Heart right ventricle (tissue), 16 donors: ENCODE measurements at regions of chr6 and their contacts with region 1.

Region 1: GRCh38 chr6:135901774-135902524 is 50.4 kb downstream of the PDE7B start:
- DNase-seq: peak in 1 of 2 donors; percentile 78
- ATAC-seq: peak; percentile 55 to 92 (median 80)
- H3K4me3 ChIP-seq: peak overlapping the region in 6 of 10 donors; percentile 3 to 31 (median 11)
- H3K27ac ChIP-seq: peak overlapping the region; percentile 51 to 83 (median 70)
- H3K4me1 ChIP-seq: peaks cover 7 to 38% (median 24%) of the 10 kb centered on the region in 9 donors
- H3K27me3 ChIP-seq: no peaks in the 10 kb centered on the region
- CTCF ChIP-seq: no peak

Region 2: GRCh38 chr6:134416418-134417154 is 1485.4 kb before region 1 on chr6:
- intact Hi-C with region 1: no loop called
- DNase-seq: no peak
- ATAC-seq: no peak
- H3K4me3 ChIP-seq: no peak overlapping the region
- H3K27ac ChIP-seq: peak overlapping the region in 1 of 10 donors; percentile 24
- H3K4me1 ChIP-seq: peaks cover 0 to 49% (median 8%) of the 10 kb centered on the region in 9 donors
- H3K27me3 ChIP-seq: no peaks in the 10 kb centered on the region
- CTCF ChIP-seq: no peak

Region 3: DNA sequence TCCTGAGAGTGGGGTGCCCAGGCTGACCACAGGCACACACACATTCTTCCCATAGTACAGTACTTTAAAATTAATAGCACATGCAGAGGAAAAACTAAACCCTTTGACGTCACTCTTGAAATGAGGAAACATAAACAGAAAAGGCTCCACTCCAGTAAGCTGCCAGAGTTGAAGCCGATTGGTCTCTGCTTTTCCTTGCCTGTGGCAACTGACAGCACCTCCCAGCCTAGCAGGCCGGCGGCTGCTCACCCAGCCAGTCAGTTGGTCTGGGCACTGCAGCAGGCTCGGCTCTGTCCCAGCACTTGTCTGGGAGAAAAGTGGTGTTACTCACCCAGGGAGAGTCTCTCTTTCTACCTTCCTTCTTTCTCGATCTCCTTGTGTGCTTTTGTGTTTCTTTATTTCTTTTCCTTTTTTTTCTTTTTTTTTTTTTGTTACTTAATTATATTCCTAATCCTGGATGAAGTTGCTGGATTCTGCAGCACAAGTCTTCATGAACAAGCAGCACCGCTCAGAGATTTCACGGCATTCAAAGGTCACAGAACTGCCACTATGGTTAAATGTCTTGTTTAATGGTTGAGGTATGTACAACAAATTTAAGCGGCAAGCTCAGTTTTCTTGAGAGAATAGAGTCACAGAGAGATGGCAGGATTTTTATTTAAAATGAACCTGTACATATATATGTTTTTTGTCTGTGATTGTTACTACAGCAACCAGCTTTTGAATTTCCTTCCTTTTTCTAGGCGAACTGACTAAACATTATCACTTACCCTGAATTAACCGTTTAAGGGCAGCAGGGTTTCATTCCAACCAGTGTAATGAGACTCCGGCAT is 50.3 kb before region 1 on chr6 and contains the start of gene PDE7B:
- intact Hi-C with region 1: loop called in 1 of 10 experiments (anchors 5 kb)
- DNase-seq: peak; percentile 81
- ATAC-seq: peak; percentile 93 to 99 (median 96)
- H3K4me3 ChIP-seq: peak within 1 kb of the TSS; percentile 2 to 58 (median 51)
- H3K27ac ChIP-seq: peak within 1 kb of the TSS; percentile 3 to 82 (median 70)
- H3K4me1 ChIP-seq: peaks cover 0 to 48% (median 14%) of the 10 kb centered on the region in 9 donors
- H3K27me3 ChIP-seq: no peaks in the 10 kb centered on the region
- CTCF ChIP-seq: no peak
- total RNA-seq, gene PDE7B: 4.3 to 19.6 (median 11.7) TPM